Caco-2 (cell line): ENCODE measurements at regions of chr2 and their contacts with region 1.

Region 1: GRCh38 chr2:70258532-70258874 is 566 bp downstream of the PCYOX1 start:
- DNase-seq: peak; percentile 59 to 65
- H3K4me3 ChIP-seq: peak overlapping the region; percentile 87
- H3K4me3 Mint-ChIP-seq: peak overlapping the region; percentile 97
- H3K27ac Mint-ChIP-seq: peak overlapping the region; percentile 92
- H3K4me1 ChIP-seq: no peaks in the 10 kb centered on the region
- H3K4me1 Mint-ChIP-seq: peaks cover 20% of the 10 kb centered on the region
- H3K27me3 ChIP-seq: no peaks in the 10 kb centered on the region
- H3K27me3 Mint-ChIP-seq: no peaks in the 10 kb centered on the region
- CTCF ChIP-seq: no peak

Region 2: DNA sequence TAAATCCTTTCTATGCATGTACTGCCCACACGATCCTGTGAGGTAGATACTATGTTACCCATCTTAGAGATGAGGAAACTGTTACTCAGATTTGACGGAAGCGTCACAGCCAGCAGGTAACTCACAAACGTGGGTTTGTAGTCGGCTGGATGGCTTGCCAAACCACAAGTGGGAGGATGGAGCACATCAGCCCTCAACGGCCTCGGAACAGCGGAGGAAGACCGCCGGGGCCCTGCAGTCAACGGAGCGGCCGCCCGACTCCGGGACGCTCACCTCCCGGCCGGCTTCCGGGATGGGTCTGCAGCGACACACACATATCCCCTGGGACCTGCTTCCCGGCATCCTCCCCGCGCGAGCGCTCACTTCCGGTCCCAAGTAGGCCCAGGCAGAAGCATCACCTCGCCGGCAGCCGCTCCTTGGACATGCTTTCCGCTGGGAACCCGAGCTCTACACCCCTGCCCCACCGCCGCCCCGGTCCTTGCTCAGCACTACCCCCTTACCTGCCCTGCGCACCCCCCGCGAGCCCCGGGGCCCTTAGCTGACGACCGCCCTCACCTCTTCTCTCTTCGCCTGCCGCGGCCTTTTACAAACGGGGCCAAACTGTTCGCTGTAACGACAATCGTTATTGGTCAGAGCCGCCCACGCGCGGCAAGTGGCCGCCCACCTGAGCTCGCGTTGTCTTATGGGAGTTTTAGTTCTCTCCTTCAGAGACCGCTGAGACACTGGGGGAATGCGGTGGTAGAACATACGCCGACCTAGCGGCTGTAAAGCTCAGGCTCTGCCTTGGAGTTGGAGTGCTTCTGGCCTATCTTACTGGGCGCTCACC is 67.9 kb before region 1 on chr2 and contains the start of gene C2orf42:
- CTCF ChIA-PET with region 1: no interaction called
- POLR2A ChIA-PET with region 1: interaction called, 21 read pairs
- intact Hi-C with region 1: no loop called
- DNase-seq: peak; percentile 97 to 98
- H3K4me3 ChIP-seq: peak within 1 kb of the TSS; percentile 95
- H3K4me3 Mint-ChIP-seq: peak within 1 kb of the TSS; percentile 90
- H3K27ac Mint-ChIP-seq: peak within 1 kb of the TSS; percentile 97
- H3K4me1 ChIP-seq: 0 out of 2 replicates have a peak, but pooled peaks cover 6% of the 10 kb centered on the region
- H3K4me1 Mint-ChIP-seq: peaks cover 10% of the 10 kb centered on the region
- H3K27me3 ChIP-seq: no peaks in the 10 kb centered on the region
- H3K27me3 Mint-ChIP-seq: no peaks in the 10 kb centered on the region
- CTCF ChIP-seq: peak in 1 of 2 experiments; percentile 21
- total RNA-seq, gene C2orf42: 12.7 and 14.8 TPM in 2 replicates

Region 3: GRCh38 chr2:70201831-70202806 is 56.4 kb before region 1 on chr2:
- CTCF ChIA-PET with region 1: no interaction called
- POLR2A ChIA-PET with region 1: no interaction called
- intact Hi-C with region 1: no loop called
- DNase-seq: no peak
- H3K4me3 ChIP-seq: no peak overlapping the region
- H3K4me3 Mint-ChIP-seq: no peak overlapping the region
- H3K27ac Mint-ChIP-seq: no peak overlapping the region
- H3K4me1 ChIP-seq: no peaks in the 10 kb centered on the region
- H3K4me1 Mint-ChIP-seq: no peaks in the 10 kb centered on the region
- H3K27me3 ChIP-seq: no peaks in the 10 kb centered on the region
- H3K27me3 Mint-ChIP-seq: no peaks in the 10 kb centered on the region
- CTCF ChIP-seq: no peak